ENCODE measurements at regions of chr1 and their contacts with region 1.

Region 1: DNA sequence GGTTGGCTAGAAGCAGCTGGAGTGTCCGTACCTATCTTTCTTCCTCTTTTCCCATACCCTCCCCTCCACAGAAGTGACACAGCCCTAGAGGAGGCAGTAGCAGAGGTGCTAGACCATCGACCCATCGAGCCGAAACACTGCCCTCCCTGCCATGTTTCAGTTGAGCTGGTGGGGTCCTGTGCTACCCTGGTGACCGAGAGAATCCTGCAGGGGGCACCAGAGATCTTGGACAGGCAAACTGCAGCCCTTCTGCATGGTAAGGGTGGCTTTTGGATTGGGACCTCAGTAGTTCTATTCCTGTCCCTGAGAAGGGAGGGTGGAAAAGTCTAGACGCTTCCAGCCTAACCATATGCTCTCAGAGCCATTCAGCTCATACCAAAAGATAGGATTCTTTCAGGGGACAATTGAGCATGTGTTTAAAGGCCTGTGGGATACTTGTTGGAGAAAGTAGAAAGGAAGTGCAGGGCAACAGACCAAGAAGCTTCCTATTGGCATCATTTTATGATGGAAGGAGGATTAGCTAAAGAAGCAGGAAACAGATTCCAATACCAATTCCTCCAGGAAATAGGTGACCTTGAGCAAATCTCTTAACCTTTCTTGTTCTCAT is 11.7 kb upstream of the BNIPL start:
- DNase-seq: peak; percentile 55
- ATAC-seq: peak; percentile 99
- H3K4me3 Mint-ChIP-seq: no peak overlapping the region
- H3K27ac Mint-ChIP-seq: no peak overlapping the region
- H3K4me1 Mint-ChIP-seq: peaks cover 6% of the 10 kb centered on the region
- H3K27me3 Mint-ChIP-seq: no peaks in the 10 kb centered on the region
- CTCF ChIP-seq: no peak

Region 2: DNA sequence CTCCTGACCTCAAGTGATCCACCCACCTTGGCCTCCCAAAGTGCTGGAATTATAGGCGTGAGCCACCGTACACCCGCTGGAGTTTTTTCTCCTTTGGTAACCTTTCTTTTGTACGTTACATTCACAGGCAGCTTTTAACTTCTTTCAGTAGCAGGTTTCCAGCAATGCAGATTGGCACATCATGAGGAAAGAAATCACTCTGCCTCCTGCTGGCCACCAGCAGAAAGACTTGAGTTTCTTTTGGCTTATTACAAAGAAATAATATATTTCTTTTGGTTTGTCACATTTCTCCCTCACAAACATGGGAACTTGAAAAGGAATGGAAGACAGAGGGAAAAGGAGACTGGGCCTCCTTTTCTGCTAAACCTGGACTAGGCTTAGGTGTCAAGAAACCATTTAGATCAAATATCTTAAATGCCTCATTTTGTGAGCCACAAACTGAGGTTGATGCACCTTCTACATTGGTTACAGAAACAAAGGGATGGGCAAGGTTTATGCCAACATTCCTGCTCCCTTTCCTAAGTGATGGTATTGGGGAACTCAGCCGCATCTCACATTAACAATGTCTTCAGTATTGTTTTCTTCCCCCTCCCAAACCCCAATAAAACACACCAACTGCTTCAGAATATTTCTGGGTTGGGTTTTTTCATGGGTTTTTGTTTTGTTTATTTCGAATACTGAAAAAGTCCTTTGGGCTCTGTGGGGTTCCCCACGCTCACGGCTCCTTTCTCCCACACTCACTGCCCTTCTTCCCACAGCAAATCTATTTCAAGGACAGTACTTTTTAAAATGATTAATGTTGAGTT is 402.9 kb before region 1 on chr1:
- CTCF ChIA-PET with region 1: no interaction called
- POLR2A ChIA-PET with region 1: no interaction called
- intact Hi-C with region 1: no loop called
- DNase-seq: no peak
- ATAC-seq: peak; percentile 82
- H3K4me3 Mint-ChIP-seq: peak overlapping the region; percentile 28
- H3K27ac Mint-ChIP-seq: peak overlapping the region; percentile 82
- H3K4me1 Mint-ChIP-seq: peaks cover 36% of the 10 kb centered on the region
- H3K27me3 Mint-ChIP-seq: no peaks in the 10 kb centered on the region
- CTCF ChIP-seq: no peak

Region 3: GRCh38 chr1:150895601-150896000 is 129.0 kb before region 1 on chr1:
- CTCF ChIA-PET with region 1: no interaction called
- POLR2A ChIA-PET with region 1: no interaction called
- intact Hi-C with region 1: no loop called
- DNase-seq: no peak
- ATAC-seq: no peak
- H3K4me3 Mint-ChIP-seq: no peak overlapping the region
- H3K27ac Mint-ChIP-seq: no peak overlapping the region
- H3K4me1 Mint-ChIP-seq: peaks cover 10% of the 10 kb centered on the region
- H3K27me3 Mint-ChIP-seq: no peaks in the 10 kb centered on the region
- CTCF ChIP-seq: no peak

Region 4: GRCh38 chr1:151047925-151048645 is 23.4 kb after region 1 on chr1:
- CTCF ChIA-PET with region 1: interaction called, 4 read pairs
- POLR2A ChIA-PET with region 1: interaction called, 5 read pairs
- intact Hi-C with region 1: loop called (anchors 1 kb)
- DNase-seq: peak; percentile 58
- ATAC-seq: peak; percentile 74
- H3K4me3 Mint-ChIP-seq: peak overlapping the region; percentile 94
- H3K27ac Mint-ChIP-seq: peak overlapping the region; percentile 89
- H3K4me1 Mint-ChIP-seq: peaks cover 42% of the 10 kb centered on the region
- H3K27me3 Mint-ChIP-seq: no peaks in the 10 kb centered on the region
- CTCF ChIP-seq: no peak

Region 5: GRCh38 chr1:151059078-151059907 is 34.6 kb after region 1 on chr1 and contains the start of gene CDC42SE1:
- CTCF ChIA-PET with region 1: interaction called, 11 read pairs
- POLR2A ChIA-PET with region 1: interaction called, 6 read pairs
- intact Hi-C with region 1: loop called (anchors 1 kb)
- DNase-seq: peak; percentile 82
- ATAC-seq: peak; percentile 88
- H3K4me3 Mint-ChIP-seq: peak within 1 kb of the TSS; percentile 98
- H3K27ac Mint-ChIP-seq: peak within 1 kb of the TSS; percentile 93
- H3K4me1 Mint-ChIP-seq: peaks cover 54% of the 10 kb centered on the region
- H3K27me3 Mint-ChIP-seq: no peaks in the 10 kb centered on the region
- CTCF ChIP-seq: no peak
- total RNA-seq, gene CDC42SE1: 139 and 148 TPM in 2 replicates

Region 6: GRCh38 chr1:151098126-151098525 is 73.5 kb after region 1 on chr1:
- CTCF ChIA-PET with region 1: interaction called, 27 read pairs
- POLR2A ChIA-PET with region 1: no interaction called
- intact Hi-C with region 1: loop called (anchors 1 kb)
- DNase-seq: no peak
- ATAC-seq: no peak
- H3K4me3 Mint-ChIP-seq: no peak overlapping the region
- H3K27ac Mint-ChIP-seq: no peak overlapping the region
- H3K4me1 Mint-ChIP-seq: no peaks in the 10 kb centered on the region
- H3K27me3 Mint-ChIP-seq: no peaks in the 10 kb centered on the region
- CTCF ChIP-seq: no peak

Region 7: DNA sequence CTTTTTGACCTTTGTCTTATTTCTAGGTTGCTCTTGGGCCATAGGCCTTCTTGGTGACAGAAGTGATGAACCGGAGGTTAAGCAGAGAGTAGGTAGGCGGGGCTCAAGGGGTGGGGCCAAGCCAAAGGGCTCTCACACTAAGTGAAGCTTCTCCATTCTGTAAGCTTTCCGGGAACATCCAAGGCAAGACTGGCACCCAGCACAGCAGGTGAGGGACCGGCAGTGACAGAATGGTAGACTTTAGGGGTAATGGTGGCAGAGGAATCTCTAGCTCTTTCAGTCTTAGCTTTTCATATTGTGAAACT is 131.8 kb after region 1 on chr1 and contains the start of gene TNFAIP8L2:
- CTCF ChIA-PET with region 1: interaction called, 17 read pairs
- POLR2A ChIA-PET with region 1: interaction called, 5 read pairs
- intact Hi-C with region 1: loop called (anchors 1 kb)
- DNase-seq: peak; percentile 58
- ATAC-seq: peak; percentile 88
- H3K4me3 Mint-ChIP-seq: peak within 1 kb of the TSS; percentile 96
- H3K27ac Mint-ChIP-seq: peak within 1 kb of the TSS; percentile 95
- H3K4me1 Mint-ChIP-seq: peaks cover 44% of the 10 kb centered on the region
- H3K27me3 Mint-ChIP-seq: no peaks in the 10 kb centered on the region
- CTCF ChIP-seq: no peak
- total RNA-seq, gene TNFAIP8L2: 8.5 and 9.3 TPM in 2 replicates

Measured in activated B cell treated with CpG ODN at 0.5 μM for 24 hours (primary cell).